SK-N-SH (cell line): ENCODE measurements at regions of chr11 and their contacts with region 1.

Region 1: GRCh38 chr11:10405855-10406592 is 49.0 kb upstream of the AMPD3 start:
- DNase-seq: peak; percentile 77
- H3K4me3 ChIP-seq: peak overlapping the region in 1 of 2 experiments; percentile 18; a peak in 1 of 4 replicates
- H3K27ac ChIP-seq: peak overlapping the region; percentile 59 to 83
- H3K4me1 ChIP-seq: peaks cover 36 to 42% of the 10 kb centered on the region in 2 experiments; a peak in 3 of 4 replicates
- H3K27me3 ChIP-seq: no peaks in the 10 kb centered on the region
- CTCF ChIP-seq: peak; percentile 82
- EP300 ChIP-seq: peak in 1 of 2 experiments; percentile 88; a peak in 2 of 4 replicates
- RAD21 ChIP-seq: peak; percentile 96

Region 2: GRCh38 chr11:10366568-10367370 is 39.3 kb before region 1 on chr11:
- CTCF ChIA-PET with region 1: interaction called, 13 read pairs
- POLR2A ChIA-PET with region 1: no interaction called
- DNase-seq: peak; percentile 39
- H3K4me3 ChIP-seq: no peak overlapping the region
- H3K27ac ChIP-seq: no peak overlapping the region; a peak in 1 of 4 replicates
- H3K4me1 ChIP-seq: peaks cover 0 to 8% of the 10 kb centered on the region in 2 experiments; a peak in 1 of 4 replicates
- H3K27me3 ChIP-seq: no peaks in the 10 kb centered on the region
- CTCF ChIP-seq: peak; percentile 72
- EP300 ChIP-seq: 0 out of 4 replicates have a peak, but pooled peaks of 1 of the 2 experiments have one; percentile 5
- RAD21 ChIP-seq: peak; percentile 73

Region 3: GRCh38 chr11:10387206-10388083 is 18.6 kb before region 1 on chr11:
- CTCF ChIA-PET with region 1: interaction called, 10 read pairs
- POLR2A ChIA-PET with region 1: no interaction called
- DNase-seq: no peak
- H3K4me3 ChIP-seq: no peak overlapping the region
- H3K27ac ChIP-seq: peak overlapping the region; percentile 20 to 41; a peak in 2 of 4 replicates
- H3K4me1 ChIP-seq: peaks cover 0 to 18% of the 10 kb centered on the region in 2 experiments; a peak in 2 of 4 replicates
- H3K27me3 ChIP-seq: no peaks in the 10 kb centered on the region
- CTCF ChIP-seq: no peak
- EP300 ChIP-seq: no peak
- RAD21 ChIP-seq: no peak

Region 4: GRCh38 chr11:10455637-10456487 is 49.8 kb after region 1 on chr11:
- CTCF ChIA-PET with region 1: interaction called, 18 read pairs
- POLR2A ChIA-PET with region 1: interaction called, 4 read pairs
- DNase-seq: peak; percentile 78
- H3K4me3 ChIP-seq: peak overlapping the region; percentile 35 to 62
- H3K27ac ChIP-seq: peak overlapping the region; percentile 70 to 78
- H3K4me1 ChIP-seq: peaks cover 12 to 34% of the 10 kb centered on the region in 2 experiments; a peak in 3 of 4 replicates
- H3K27me3 ChIP-seq: no peaks in the 10 kb centered on the region
- CTCF ChIP-seq: no peak
- EP300 ChIP-seq: peak in 1 of 2 experiments; percentile 36; a peak in 1 of 4 replicates
- RAD21 ChIP-seq: 0 out of 2 replicates have a peak, but pooled peaks have one; percentile 16

Region 5: GRCh38 chr11:10540923-10541560 is 135.0 kb after region 1 on chr11 and contains the start of gene RNF141:
- CTCF ChIA-PET with region 1: interaction called, 25 read pairs
- POLR2A ChIA-PET with region 1: interaction called, 3 read pairs
- DNase-seq: peak; percentile 97
- H3K4me3 ChIP-seq: peak within 1 kb of the TSS; percentile 72 to 89
- H3K27ac ChIP-seq: peak within 1 kb of the TSS; percentile 77 to 91
- H3K4me1 ChIP-seq: peaks cover 7 to 11% of the 10 kb centered on the region in 2 experiments; a peak in 3 of 4 replicates
- H3K27me3 ChIP-seq: no peaks in the 10 kb centered on the region
- CTCF ChIP-seq: peak; percentile 74
- EP300 ChIP-seq: 0 out of 4 replicates have a peak, but pooled peaks of 1 of the 2 experiments have one; percentile 19
- RAD21 ChIP-seq: peak; percentile 53
- polyA plus RNA-seq, gene RNF141: 6.9 and 10.3 TPM in 2 replicates

Region 6: DNA sequence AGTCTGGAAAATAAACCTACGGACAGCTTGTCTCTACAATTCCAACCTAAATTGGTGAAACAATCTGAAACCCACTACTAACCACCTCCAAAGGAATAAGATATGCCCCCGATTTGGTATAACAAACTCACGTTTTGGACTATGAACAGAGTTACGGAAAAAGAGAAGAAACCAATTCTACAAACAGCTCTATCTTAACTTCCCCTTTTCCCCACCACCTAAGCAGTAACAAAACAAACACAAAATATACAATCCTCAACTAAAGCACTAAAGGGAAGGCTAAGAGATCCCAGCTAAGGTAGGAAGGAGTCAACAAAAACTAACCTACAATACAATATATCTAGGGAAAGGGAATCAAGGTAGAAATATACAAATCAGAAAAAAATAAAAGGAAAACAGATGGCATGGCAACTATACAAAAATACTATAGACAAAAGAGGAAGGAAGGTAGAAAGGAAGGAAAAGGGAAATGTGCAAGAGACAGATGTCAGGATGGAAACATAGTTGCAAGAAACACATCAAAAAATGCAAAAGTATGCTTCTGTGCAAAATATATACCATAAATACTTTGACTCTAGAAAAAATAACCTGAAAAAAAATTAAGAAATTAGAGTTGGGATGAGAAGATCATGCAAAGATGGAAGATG is 206.3 kb after region 1 on chr11:
- CTCF ChIA-PET with region 1: no interaction called
- POLR2A ChIA-PET with region 1: no interaction called
- DNase-seq: no peak
- H3K4me3 ChIP-seq: no peak overlapping the region
- H3K27ac ChIP-seq: no peak overlapping the region
- H3K4me1 ChIP-seq: no peaks in the 10 kb centered on the region
- H3K27me3 ChIP-seq: no peaks in the 10 kb centered on the region
- CTCF ChIP-seq: no peak
- EP300 ChIP-seq: no peak
- RAD21 ChIP-seq: no peak

Region 7: DNA sequence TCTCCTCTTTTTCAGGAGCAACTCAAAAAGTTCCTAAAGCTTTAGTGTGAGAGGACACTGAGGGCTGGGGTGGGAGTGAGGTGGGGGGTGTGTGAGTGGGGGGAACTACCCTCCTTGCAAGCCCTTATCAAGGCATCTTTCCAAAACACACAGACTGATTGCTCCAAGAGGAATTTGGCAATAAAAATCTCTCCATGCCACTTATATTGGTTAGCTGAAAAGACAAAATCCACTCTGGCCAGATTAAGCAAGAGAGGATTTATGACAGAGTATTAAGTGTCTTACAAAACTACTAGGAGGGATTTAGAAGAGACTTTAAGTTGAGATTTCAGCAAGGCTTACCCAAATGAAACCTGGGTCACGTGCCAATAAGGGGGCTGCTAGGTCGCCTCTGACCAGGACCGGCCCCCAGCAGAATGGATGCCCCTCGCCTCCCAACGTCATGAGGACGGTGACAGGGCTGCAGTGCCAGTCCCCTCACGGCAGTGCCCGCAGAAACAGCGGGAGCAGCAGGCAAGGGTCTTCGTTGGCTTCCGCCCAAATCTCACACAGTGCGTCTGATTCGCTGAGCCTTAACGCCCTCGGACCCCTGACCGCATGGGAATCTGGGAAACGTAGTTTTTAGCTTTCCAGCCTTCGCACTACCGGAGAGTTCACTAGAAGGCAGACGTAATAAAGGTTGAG is 322.9 kb after region 1 on chr11:
- CTCF ChIA-PET with region 1: interaction called, 58 read pairs
- POLR2A ChIA-PET with region 1: no interaction called
- DNase-seq: peak; percentile 81
- H3K4me3 ChIP-seq: peak overlapping the region in 1 of 2 experiments; percentile 44; a peak in 2 of 4 replicates
- H3K27ac ChIP-seq: peak overlapping the region in 1 of 2 experiments; percentile 23; a peak in 1 of 4 replicates
- H3K4me1 ChIP-seq: peaks cover 0 to 4% of the 10 kb centered on the region in 2 experiments; a peak in 2 of 4 replicates
- H3K27me3 ChIP-seq: no peaks in the 10 kb centered on the region
- CTCF ChIP-seq: no peak
- EP300 ChIP-seq: no peak
- RAD21 ChIP-seq: no peak

Region 8: DNA sequence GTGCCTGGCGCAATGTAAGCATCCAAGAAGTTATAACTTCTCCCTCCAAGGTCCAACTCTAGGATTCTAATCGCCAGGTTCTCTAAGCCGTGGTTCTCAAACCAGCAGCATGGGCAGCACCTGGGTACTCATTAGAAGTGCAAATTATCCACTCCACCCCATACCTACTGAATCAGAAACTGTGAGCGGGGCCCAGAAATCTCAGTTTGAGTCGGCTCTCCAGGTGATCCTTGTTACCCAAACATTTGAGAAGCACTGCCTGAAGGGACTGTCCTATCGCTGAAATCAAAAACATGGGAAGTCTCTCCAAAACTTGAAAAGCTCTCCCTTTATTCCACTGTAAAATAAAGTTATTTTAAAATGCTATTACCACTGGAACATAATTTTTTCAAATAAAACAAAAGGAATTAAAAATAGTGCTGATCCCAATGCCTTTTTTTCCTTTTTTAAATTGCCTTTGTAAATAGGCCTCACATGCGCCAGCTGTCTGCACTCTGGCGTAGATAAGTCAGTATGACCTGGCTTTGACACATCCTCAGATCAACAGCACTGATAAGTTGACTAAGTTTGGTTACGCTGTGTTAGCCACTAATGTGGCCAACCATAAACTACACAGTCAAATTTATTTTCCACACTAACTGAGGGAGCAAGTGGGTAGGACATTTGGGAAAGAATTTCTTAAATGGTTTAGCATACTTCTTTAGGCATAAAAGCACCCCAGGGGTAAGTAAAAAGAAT is 336.6 kb after region 1 on chr11:
- CTCF ChIA-PET with region 1: interaction called, 58 read pairs
- POLR2A ChIA-PET with region 1: no interaction called
- DNase-seq: peak; percentile 57
- H3K4me3 ChIP-seq: no peak overlapping the region
- H3K27ac ChIP-seq: peak overlapping the region in 1 of 2 experiments; percentile 92; a peak in 3 of 4 replicates
- H3K4me1 ChIP-seq: peaks cover 9 to 21% of the 10 kb centered on the region in 2 experiments; a peak in 3 of 4 replicates
- H3K27me3 ChIP-seq: no peaks in the 10 kb centered on the region
- CTCF ChIP-seq: no peak
- EP300 ChIP-seq: peak; percentile 41 to 74; a peak in 3 of 4 replicates
- RAD21 ChIP-seq: no peak

Region 9: GRCh38 chr11:11022125-11022730 is 616.2 kb after region 1 on chr11:
- CTCF ChIA-PET with region 1: no interaction called
- POLR2A ChIA-PET with region 1: no interaction called
- DNase-seq: peak; percentile 32
- H3K4me3 ChIP-seq: no peak overlapping the region
- H3K27ac ChIP-seq: no peak overlapping the region
- H3K4me1 ChIP-seq: peaks cover 0 to 6% of the 10 kb centered on the region in 2 experiments; a peak in 1 of 4 replicates
- H3K27me3 ChIP-seq: no peaks in the 10 kb centered on the region
- CTCF ChIP-seq: peak; percentile 66
- EP300 ChIP-seq: no peak
- RAD21 ChIP-seq: peak; percentile 67